ENCODE measurements at regions of chr11 and their contacts with region 1.

Region 1: DNA sequence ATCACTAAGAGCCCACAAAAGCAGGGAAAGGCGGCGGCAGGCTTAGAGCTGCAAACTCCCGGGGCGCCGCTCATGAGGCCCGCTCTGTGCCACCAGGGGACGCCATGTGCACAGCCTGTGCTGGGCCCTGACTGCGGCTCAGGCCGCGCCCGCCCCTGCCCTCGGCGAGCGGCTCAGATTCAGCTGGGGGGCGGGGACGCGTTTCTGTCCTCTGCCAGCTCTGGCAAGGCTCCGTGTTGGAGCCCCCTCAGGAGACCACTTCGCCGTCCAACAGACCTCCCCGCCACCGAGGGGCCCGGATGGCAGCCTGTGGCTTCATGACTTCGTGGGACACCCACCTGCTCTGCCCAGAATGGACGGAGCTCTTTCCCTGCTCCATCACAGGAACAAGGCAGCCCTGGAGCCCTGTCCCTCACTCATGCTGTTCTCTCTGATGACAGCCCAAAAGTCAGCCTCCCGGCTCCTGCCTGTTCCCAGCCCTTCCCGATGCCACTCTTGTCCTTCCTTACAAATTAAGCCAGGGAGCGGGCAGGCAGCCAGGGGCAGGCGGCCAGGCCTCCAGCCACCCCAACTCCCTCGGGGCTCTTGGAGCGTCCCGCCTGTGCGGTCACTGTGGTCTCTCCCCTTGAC is 69.1 kb downstream of the NAT10 start:
- DNase-seq: peak; percentile 88
- ATAC-seq: peak; percentile 99
- H3K4me3 Mint-ChIP-seq: peak overlapping the region; percentile 52
- H3K27ac Mint-ChIP-seq: no peak overlapping the region
- H3K4me1 Mint-ChIP-seq: peaks cover 24% of the 10 kb centered on the region
- H3K27me3 Mint-ChIP-seq: peaks cover 5% of the 10 kb centered on the region

Region 2: GRCh38 chr11:33847251-33847650 is 327.3 kb before region 1 on chr11:
- CTCF ChIA-PET with region 1: no interaction called
- POLR2A ChIA-PET with region 1: no interaction called
- DNase-seq: no peak
- ATAC-seq: no peak
- H3K4me3 Mint-ChIP-seq: no peak overlapping the region
- H3K27ac Mint-ChIP-seq: no peak overlapping the region
- H3K4me1 Mint-ChIP-seq: no peaks in the 10 kb centered on the region
- H3K27me3 Mint-ChIP-seq: peaks cover 28% of the 10 kb centered on the region

Region 3: DNA sequence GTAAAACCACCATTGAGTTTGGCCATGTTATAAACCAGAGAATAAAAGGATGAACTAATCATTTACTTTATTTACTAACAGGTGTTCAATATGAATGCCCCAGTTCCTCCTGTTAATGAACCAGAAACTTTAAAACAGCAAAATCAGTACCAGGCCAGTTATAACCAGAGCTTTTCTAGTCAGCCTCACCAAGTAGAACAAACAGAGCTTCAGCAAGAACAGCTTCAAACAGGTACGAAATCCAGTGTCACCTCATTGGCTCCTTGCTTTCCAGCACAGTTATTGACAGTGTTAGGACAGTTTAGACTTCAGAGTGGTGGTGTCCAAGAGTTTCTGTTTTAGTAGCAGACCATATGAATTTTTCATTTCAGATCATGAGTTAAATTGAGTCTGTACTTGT is 82.7 kb before region 1 on chr11:
- CTCF ChIA-PET with region 1: no interaction called
- POLR2A ChIA-PET with region 1: no interaction called
- DNase-seq: no peak
- ATAC-seq: no peak
- H3K4me3 Mint-ChIP-seq: no peak overlapping the region
- H3K27ac Mint-ChIP-seq: no peak overlapping the region
- H3K4me1 Mint-ChIP-seq: peaks cover 6% of the 10 kb centered on the region
- H3K27me3 Mint-ChIP-seq: no peaks in the 10 kb centered on the region

Region 4: DNA sequence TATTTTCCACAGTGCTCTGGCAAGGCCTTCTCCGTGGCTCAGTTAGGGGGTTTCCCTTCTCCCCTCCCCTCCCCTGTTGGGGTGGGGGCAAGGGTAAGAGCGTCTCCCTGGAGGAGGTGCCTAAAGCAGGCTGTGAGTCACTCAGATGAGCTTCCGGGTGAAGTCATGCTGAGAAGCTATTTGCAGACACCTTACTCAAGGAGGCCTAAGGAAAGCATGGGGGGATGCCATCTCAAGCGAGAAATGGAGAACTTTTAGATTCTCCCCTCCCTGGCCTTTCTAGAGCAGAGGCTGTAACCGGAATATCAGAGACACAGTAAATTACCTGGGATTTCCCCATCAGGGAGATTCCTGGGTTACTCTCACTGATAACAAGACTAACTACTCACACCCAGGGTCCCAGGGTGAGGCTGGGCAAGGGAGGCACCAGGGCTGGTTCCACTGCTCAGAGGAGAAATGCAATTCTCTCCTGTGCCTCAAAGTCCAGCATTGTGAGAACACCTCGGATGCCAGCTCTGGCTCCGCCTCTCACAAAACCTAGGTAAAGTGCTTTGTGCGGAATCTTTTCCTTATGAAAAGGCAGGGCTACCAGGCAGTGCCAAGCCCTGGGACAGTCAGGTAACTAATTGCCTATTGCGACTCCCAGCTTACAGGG is 59.7 kb after region 1 on chr11:
- CTCF ChIA-PET with region 1: interaction called, 21 read pairs
- POLR2A ChIA-PET with region 1: no interaction called
- DNase-seq: peak; percentile 80
- ATAC-seq: peak; percentile 95
- H3K4me3 Mint-ChIP-seq: no peak overlapping the region
- H3K27ac Mint-ChIP-seq: peak overlapping the region; percentile 72
- H3K4me1 Mint-ChIP-seq: peaks cover 29% of the 10 kb centered on the region
- H3K27me3 Mint-ChIP-seq: no peaks in the 10 kb centered on the region

Region 5: GRCh38 chr11:34313099-34313517 is 138.6 kb after region 1 on chr11:
- CTCF ChIA-PET with region 1: interaction called, 11 read pairs
- POLR2A ChIA-PET with region 1: no interaction called
- DNase-seq: peak; percentile 77
- ATAC-seq: peak; percentile 88
- H3K4me3 Mint-ChIP-seq: peak overlapping the region; percentile 15
- H3K27ac Mint-ChIP-seq: no peak overlapping the region
- H3K4me1 Mint-ChIP-seq: peaks cover 56% of the 10 kb centered on the region
- H3K27me3 Mint-ChIP-seq: peaks cover 5% of the 10 kb centered on the region

Region 6: GRCh38 chr11:34357701-34358257 is 183.3 kb after region 1 on chr11 and contains the start of gene ABTB2:
- CTCF ChIA-PET with region 1: interaction called, 70 read pairs
- POLR2A ChIA-PET with region 1: interaction called, 4 read pairs
- DNase-seq: peak; percentile 99
- ATAC-seq: peak; percentile 91
- H3K4me3 Mint-ChIP-seq: peak within 1 kb of the TSS; percentile 78
- H3K27ac Mint-ChIP-seq: peak within 1 kb of the TSS; percentile 74
- H3K4me1 Mint-ChIP-seq: peaks cover 32% of the 10 kb centered on the region
- H3K27me3 Mint-ChIP-seq: peaks cover 44% of the 10 kb centered on the region
- total RNA-seq, gene ABTB2: 0.97 TPM

Region 7: GRCh38 chr11:34731603-34732002 is 557.1 kb after region 1 on chr11:
- CTCF ChIA-PET with region 1: no interaction called
- POLR2A ChIA-PET with region 1: no interaction called
- DNase-seq: no peak
- ATAC-seq: no peak
- H3K4me3 Mint-ChIP-seq: no peak overlapping the region
- H3K27ac Mint-ChIP-seq: no peak overlapping the region
- H3K4me1 Mint-ChIP-seq: no peaks in the 10 kb centered on the region
- H3K27me3 Mint-ChIP-seq: peaks cover 15% of the 10 kb centered on the region